ENCODE measurements at regions of chr5 and their contacts with region 1.

Region 1: DNA sequence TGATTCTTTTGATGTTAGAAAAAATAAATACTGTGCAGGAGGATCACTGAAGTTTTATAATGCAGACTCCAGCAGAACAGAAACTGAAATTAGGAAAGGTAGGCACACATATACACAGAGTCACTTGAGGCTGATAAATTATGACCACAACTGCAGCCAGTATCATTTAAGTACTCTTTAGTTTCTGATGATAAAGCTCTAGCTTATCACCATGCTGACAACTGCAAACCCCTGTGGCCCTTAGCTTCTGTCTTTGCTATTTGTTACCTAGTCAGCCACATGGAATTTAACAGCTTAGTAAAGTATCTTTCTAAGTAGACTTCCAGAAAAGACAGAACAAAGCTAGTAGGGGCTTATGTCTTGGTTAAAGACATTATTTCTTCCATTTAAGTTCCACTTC is 734.8 kb upstream of the CDH6 start:
- DNase-seq: no peak
- H3K4me3 ChIP-seq: no peak overlapping the region
- H3K27ac ChIP-seq: no peak overlapping the region
- H3K4me1 ChIP-seq: no peaks in the 10 kb centered on the region
- H3K27me3 ChIP-seq: no peaks in the 10 kb centered on the region
- CTCF ChIP-seq: no peak

Region 2: GRCh38 chr5:30498972-30499371 is 40.3 kb after region 1 on chr5:
- CTCF ChIA-PET with region 1: no interaction called
- POLR2A ChIA-PET with region 1: no interaction called
- intact Hi-C with region 1: no loop called
- DNase-seq: no peak
- H3K4me3 ChIP-seq: no peak overlapping the region
- H3K27ac ChIP-seq: no peak overlapping the region
- H3K4me1 ChIP-seq: no peaks in the 10 kb centered on the region
- H3K27me3 ChIP-seq: no peaks in the 10 kb centered on the region
- CTCF ChIP-seq: no peak

Region 3: DNA sequence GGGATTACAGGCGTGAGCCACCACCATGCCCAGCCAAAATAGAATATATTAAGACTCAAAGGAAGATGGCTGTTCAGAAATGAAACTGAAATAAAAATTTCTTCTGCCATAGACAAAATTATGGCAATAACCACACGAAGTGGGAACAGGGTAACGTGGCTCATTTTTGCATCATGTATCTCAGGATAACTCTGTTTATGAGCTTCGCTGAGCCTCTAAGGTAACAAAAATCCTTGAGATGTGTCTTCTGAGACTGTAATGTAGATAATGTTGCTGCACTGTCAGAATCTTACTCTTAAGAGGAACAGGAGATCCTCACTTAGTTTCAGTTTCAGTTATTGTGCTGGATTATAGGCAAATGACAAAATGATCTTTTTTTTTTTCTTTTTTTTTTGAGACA is 1561.6 kb after region 1 on chr5:
- CTCF ChIA-PET with region 1: no interaction called
- POLR2A ChIA-PET with region 1: interaction called, 10 read pairs
- intact Hi-C with region 1: no loop called
- DNase-seq: no peak
- H3K4me3 ChIP-seq: no peak overlapping the region
- H3K27ac ChIP-seq: no peak overlapping the region
- H3K4me1 ChIP-seq: no peaks in the 10 kb centered on the region
- H3K27me3 ChIP-seq: peaks cover 91% of the 10 kb centered on the region
- CTCF ChIP-seq: no peak